Activated B cell treated with CpG ODN at 0.5 μM for 24 hours (primary cell): ENCODE measurements at regions of chr1 and their contacts with region 1.

Region 1: GRCh38 chr1:36187800-36188593 is 32.0 kb downstream of the MAP7D1 start:
- DNase-seq: peak; percentile 58
- ATAC-seq: peak; percentile 99
- H3K4me3 Mint-ChIP-seq: no peak overlapping the region
- H3K27ac Mint-ChIP-seq: no peak overlapping the region
- H3K4me1 Mint-ChIP-seq: peaks cover 3% of the 10 kb centered on the region
- H3K27me3 Mint-ChIP-seq: no peaks in the 10 kb centered on the region
- CTCF ChIP-seq: no peak

Region 2: GRCh38 chr1:36155408-36156328 is 32.3 kb before region 1 on chr1 and contains the start of gene MAP7D1:
- CTCF ChIA-PET with region 1: interaction called, 115 read pairs
- POLR2A ChIA-PET with region 1: interaction called, 54 read pairs
- intact Hi-C with region 1: no loop called
- DNase-seq: peak; percentile 88
- ATAC-seq: peak; percentile 76
- H3K4me3 Mint-ChIP-seq: peak within 1 kb of the TSS; percentile 89
- H3K27ac Mint-ChIP-seq: peak within 1 kb of the TSS; percentile 90
- H3K4me1 Mint-ChIP-seq: peaks cover 65% of the 10 kb centered on the region
- H3K27me3 Mint-ChIP-seq: no peaks in the 10 kb centered on the region
- CTCF ChIP-seq: no peak
- total RNA-seq, gene MAP7D1: 56.5 and 59.9 TPM in 2 replicates

Region 3: DNA sequence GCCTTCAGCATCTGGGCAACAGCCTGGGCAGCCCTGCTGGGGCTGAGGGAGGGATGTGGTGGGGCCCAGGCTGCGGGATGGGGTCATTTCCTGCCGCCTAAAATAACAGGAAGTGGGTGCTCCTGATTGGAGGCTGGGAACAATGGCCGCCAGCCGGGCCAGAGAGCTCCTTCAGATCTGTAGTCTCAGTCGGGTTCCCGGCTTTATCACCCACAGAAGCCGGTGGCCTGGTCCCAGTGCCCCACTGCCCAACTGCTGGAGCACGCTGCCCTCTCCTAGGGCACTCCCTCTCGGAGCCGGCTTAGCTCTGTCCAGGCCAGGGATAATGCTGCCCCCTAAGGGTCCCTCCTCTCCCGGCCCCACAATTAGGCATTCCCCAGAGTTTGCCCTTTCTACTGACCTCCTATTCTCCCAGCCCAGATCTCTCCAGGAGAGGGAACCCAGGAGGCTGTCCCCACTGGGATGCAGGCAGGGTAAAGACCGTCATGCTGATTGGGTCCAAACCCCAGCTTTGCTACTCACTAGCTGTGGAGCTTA is 27.0 kb before region 1 on chr1:
- CTCF ChIA-PET with region 1: interaction called, 15 read pairs
- POLR2A ChIA-PET with region 1: interaction called, 15 read pairs
- intact Hi-C with region 1: no loop called
- DNase-seq: no peak
- ATAC-seq: no peak
- H3K4me3 Mint-ChIP-seq: peak overlapping the region; percentile 65
- H3K27ac Mint-ChIP-seq: peak overlapping the region; percentile 92
- H3K4me1 Mint-ChIP-seq: peaks cover 69% of the 10 kb centered on the region
- H3K27me3 Mint-ChIP-seq: no peaks in the 10 kb centered on the region
- CTCF ChIP-seq: no peak

Region 4: DNA sequence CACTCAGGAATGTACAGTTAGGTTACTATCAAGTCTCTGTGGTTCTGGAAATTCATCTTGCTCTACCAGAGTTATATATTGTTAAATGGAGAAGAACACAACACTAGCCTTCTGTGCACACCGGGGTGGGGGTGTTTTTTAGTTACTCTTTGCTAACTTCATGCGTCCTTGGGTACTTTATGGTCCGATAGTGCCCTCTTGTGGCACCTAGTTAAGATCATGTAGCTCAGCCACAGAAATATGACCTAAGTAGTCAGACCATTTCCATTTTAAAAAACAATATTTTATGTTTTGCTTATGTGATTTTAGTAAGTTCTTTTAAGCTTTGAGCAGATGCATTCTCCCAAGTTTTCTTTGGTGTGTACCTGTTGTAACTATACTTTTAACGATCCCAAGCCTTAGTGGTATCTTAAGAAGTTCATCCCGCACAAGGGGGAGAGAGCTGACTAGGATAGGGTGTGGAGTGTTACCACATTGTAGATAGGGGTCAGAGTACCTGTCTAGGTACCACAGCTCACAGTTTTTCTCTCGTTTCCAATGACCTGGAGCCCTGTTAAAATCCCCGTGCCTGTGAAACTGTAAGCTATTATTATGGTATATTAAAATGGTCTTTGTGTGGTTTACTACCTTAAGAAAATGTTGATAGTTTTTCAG is 97.6 kb after region 1 on chr1:
- CTCF ChIA-PET with region 1: interaction called, 17 read pairs
- POLR2A ChIA-PET with region 1: interaction called, 4 read pairs
- intact Hi-C with region 1: loop called (anchors 1 kb)
- DNase-seq: no peak
- ATAC-seq: peak; percentile 92
- H3K4me3 Mint-ChIP-seq: no peak overlapping the region
- H3K27ac Mint-ChIP-seq: peak overlapping the region; percentile 59
- H3K4me1 Mint-ChIP-seq: peaks cover 11% of the 10 kb centered on the region
- H3K27me3 Mint-ChIP-seq: no peaks in the 10 kb centered on the region
- CTCF ChIP-seq: no peak